Activated T-helper 1 cell treated with anti-CD3 and anti-CD28 coated beads, Interleukin-12 subunit alpha, Interleukin-12 subunit beta, Interleukin-2, Interleukin-4 antibody, amounts not matched to agents 30 ng/mL and 10 ng/mL and 1 ng/mL, durations not matched to agents 14 hours and 24 hours and 36 hours (primary cell): ENCODE measurements at regions of chr15 and their contacts with region 1.

Region 1: GRCh38 chr15:48925714-48926223 is 38.0 kb downstream of the SHC4 start:
- DNase-seq: no peak
- H3K4me3 Mint-ChIP-seq: peak overlapping the region; percentile 31
- H3K27ac Mint-ChIP-seq: peak overlapping the region; percentile 96
- H3K4me1 Mint-ChIP-seq: peaks cover 74% of the 10 kb centered on the region
- H3K27me3 Mint-ChIP-seq: no peaks in the 10 kb centered on the region

Region 2: DNA sequence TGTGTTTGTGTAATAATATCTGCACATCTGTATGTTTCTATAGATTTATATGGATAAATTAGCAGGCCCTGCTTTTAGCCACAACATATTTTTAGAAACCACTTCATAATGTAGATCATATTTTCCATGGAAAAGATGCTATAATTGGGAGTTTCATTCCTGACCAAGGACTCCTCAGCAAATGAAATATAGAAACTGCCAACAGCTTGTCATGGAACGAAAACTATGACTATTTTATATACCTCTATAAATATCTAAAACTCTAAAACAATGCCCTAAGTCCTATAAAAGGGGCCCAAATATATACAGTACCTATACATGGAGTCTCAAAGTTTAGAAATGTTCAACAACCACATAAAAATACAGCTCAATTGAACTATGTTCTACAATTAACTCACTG is 19.9 kb before region 1 on chr15:
- intact Hi-C with region 1: loop called (anchors 2 kb)
- DNase-seq: no peak
- H3K4me3 Mint-ChIP-seq: no peak overlapping the region
- H3K27ac Mint-ChIP-seq: peak overlapping the region; percentile 74
- H3K4me1 Mint-ChIP-seq: peaks cover 29% of the 10 kb centered on the region
- H3K27me3 Mint-ChIP-seq: peaks cover 2% of the 10 kb centered on the region

Region 3: GRCh38 chr15:48914717-48915116 is 11.1 kb before region 1 on chr15:
- intact Hi-C with region 1: loop called (anchors 1 kb)
- DNase-seq: no peak
- H3K4me3 Mint-ChIP-seq: no peak overlapping the region
- H3K27ac Mint-ChIP-seq: no peak overlapping the region
- H3K4me1 Mint-ChIP-seq: peaks cover 17% of the 10 kb centered on the region
- H3K27me3 Mint-ChIP-seq: no peaks in the 10 kb centered on the region

Region 4: GRCh38 chr15:48940448-48940893 is 14.7 kb after region 1 on chr15:
- intact Hi-C with region 1: loop called (anchors 1 kb)
- DNase-seq: no peak
- H3K4me3 Mint-ChIP-seq: no peak overlapping the region
- H3K27ac Mint-ChIP-seq: peak overlapping the region; percentile 69
- H3K4me1 Mint-ChIP-seq: peaks cover 53% of the 10 kb centered on the region
- H3K27me3 Mint-ChIP-seq: no peaks in the 10 kb centered on the region

Region 5: DNA sequence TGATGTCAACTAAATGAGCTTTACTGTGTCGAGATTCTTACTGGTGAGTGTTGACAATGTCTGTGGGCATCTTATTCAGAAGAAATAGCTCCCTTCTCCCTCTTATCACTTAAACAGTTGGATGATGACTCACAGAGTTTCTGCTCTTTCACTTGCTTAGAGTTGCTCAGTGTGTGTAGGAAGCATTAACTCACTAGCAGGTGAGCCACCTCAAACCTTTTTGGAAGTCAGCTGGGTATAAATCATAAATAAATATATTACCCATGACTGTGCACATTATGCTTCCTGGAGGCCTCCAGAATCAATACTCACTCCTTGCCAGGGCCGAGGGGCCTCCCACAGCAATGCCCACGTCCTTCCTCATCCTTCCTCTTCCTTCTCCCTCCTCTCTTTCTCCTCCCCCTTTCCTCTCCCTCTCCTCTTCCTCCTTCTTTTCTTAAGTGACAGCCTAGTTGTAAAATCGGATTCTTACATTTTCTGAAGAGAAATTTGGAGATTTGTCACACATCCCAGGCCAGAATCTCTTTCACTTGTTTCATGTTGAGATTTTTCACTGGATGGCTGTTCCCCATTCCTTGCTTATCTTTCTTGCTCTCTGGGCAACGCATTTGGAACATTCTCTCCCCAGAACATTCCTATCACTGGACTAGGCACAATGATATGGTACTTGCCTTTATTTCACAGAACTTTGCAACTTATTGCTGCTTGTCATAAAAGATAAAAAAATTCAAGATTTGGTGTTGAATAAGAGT is 20.5 kb after region 1 on chr15:
- intact Hi-C with region 1: loop called (anchors 1 kb)
- DNase-seq: no peak
- H3K4me3 Mint-ChIP-seq: no peak overlapping the region
- H3K27ac Mint-ChIP-seq: peak overlapping the region; percentile 82
- H3K4me1 Mint-ChIP-seq: peaks cover 57% of the 10 kb centered on the region
- H3K27me3 Mint-ChIP-seq: no peaks in the 10 kb centered on the region

Region 6: DNA sequence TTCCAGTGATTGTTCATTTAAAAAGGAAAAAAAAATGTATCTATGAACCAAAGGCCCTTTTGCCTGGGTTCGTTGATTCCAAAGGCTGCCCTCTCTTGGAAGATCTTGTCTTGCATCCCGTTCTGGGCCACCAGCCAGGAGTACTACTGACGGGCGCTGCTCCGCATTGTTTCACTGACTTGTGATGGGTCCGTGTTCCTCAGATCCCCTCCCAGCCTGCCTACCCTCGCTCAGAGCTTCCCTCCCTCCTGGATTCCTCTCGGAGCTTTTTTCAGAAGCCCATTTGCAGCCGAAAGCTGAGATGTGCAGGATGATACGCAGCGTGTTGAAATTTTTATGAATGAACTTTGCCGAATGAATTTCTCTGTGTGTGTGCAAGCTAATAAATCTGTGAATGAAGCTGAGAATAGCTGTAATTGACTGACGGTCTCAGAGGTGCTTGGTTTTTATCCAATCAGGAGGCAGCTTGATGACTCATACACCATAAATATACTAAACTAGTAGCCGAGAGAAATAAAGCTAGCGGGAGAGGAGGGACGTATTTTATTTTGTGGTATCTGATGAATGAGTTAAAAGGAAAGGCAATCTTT is 37.9 kb after region 1 on chr15 and contains the start of gene SHC4:
- intact Hi-C with region 1: loop called (anchors 1 kb)
- DNase-seq: no peak
- H3K4me3 Mint-ChIP-seq: peak within 1 kb of the TSS; percentile 84
- H3K27ac Mint-ChIP-seq: peak within 1 kb of the TSS; percentile 82
- H3K4me1 Mint-ChIP-seq: peaks cover 64% of the 10 kb centered on the region
- H3K27me3 Mint-ChIP-seq: peaks cover 11% of the 10 kb centered on the region
- total RNA-seq, gene SHC4: 25.7 and 26.4 TPM in 2 replicates

Region 7: GRCh38 chr15:49023354-49023753 is 97.6 kb after region 1 on chr15:
- intact Hi-C with region 1: loop called (anchors 2 kb)
- DNase-seq: no peak
- H3K4me3 Mint-ChIP-seq: no peak overlapping the region
- H3K27ac Mint-ChIP-seq: peak overlapping the region; percentile 56
- H3K4me1 Mint-ChIP-seq: peaks cover 17% of the 10 kb centered on the region
- H3K27me3 Mint-ChIP-seq: no peaks in the 10 kb centered on the region